ENCODE measurements at regions of chr1 and their contacts with region 1.

Region 1: GRCh38 chr1:54996359-54996868 is 2.3 kb upstream of the BSND start:
- DNase-seq: no peak
- H3K4me3 ChIP-seq: no peak overlapping the region
- H3K27me3 ChIP-seq: peaks cover 10% of the 10 kb centered on the region
- CTCF ChIP-seq: peak; percentile 87

Region 2: GRCh38 chr1:54962612-54963395 is 33.6 kb before region 1 on chr1:
- CTCF ChIA-PET with region 1: interaction called, 30 read pairs
- POLR2A ChIA-PET with region 1: no interaction called
- DNase-seq: no peak
- H3K4me3 ChIP-seq: no peak overlapping the region
- H3K27me3 ChIP-seq: no peaks in the 10 kb centered on the region
- CTCF ChIP-seq: no peak

Region 3: GRCh38 chr1:54973205-54973921 is 23.1 kb before region 1 on chr1:
- CTCF ChIA-PET with region 1: interaction called, 17 read pairs
- POLR2A ChIA-PET with region 1: no interaction called
- DNase-seq: no peak
- H3K4me3 ChIP-seq: no peak overlapping the region
- H3K27me3 ChIP-seq: no peaks in the 10 kb centered on the region
- CTCF ChIP-seq: peak; percentile 62

Region 4: GRCh38 chr1:54982739-54983138 is 13.7 kb before region 1 on chr1:
- CTCF ChIA-PET with region 1: interaction called, 37 read pairs
- POLR2A ChIA-PET with region 1: no interaction called
- DNase-seq: no peak
- H3K4me3 ChIP-seq: no peak overlapping the region
- H3K27me3 ChIP-seq: peaks cover 26% of the 10 kb centered on the region
- CTCF ChIP-seq: no peak

Region 5: GRCh38 chr1:55007625-55008024 is 11.2 kb after region 1 on chr1:
- CTCF ChIA-PET with region 1: interaction called, 29 read pairs
- POLR2A ChIA-PET with region 1: no interaction called
- DNase-seq: peak; percentile 42
- H3K4me3 ChIP-seq: no peak overlapping the region
- H3K27me3 ChIP-seq: no peaks in the 10 kb centered on the region; the same call in 1 of the 2 replicates
- CTCF ChIP-seq: no peak

Region 6: GRCh38 chr1:55021965-55022546 is 25.6 kb after region 1 on chr1:
- CTCF ChIA-PET with region 1: interaction called, 18 read pairs
- POLR2A ChIA-PET with region 1: no interaction called
- DNase-seq: peak; percentile 40
- H3K4me3 ChIP-seq: no peak overlapping the region
- H3K27me3 ChIP-seq: peaks cover 4% of the 10 kb centered on the region
- CTCF ChIP-seq: peak; percentile 97

Region 7: DNA sequence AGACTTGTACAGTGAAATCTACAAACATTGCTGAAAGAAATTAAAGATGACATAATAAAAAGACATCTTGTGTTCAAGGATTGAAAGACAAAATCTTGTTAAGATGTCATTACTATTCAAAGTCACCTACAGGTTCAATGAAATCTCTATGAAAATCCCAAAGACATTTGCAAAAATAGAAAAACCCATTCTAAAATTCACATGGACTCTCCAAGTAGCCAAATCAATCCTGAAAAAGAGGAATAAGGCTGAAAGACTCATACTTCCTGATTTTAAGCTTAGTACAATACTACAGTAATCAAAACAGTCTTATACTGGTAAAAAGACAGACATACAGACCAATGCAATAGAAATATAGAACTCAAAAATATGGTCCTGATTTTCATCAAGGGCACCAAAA is 121.5 kb after region 1 on chr1:
- CTCF ChIA-PET with region 1: no interaction called
- POLR2A ChIA-PET with region 1: no interaction called
- DNase-seq: no peak
- H3K4me3 ChIP-seq: no peak overlapping the region
- H3K27me3 ChIP-seq: no peaks in the 10 kb centered on the region
- CTCF ChIP-seq: no peak

Measured in BJ (cell line).